Head of caudate nucleus (tissue), 42 donors: ENCODE measurements at regions of chr1 and their contacts with region 1.

Region 1: GRCh38 chr1:220089650-220090556 is at the start of gene BPNT1:
- DNase-seq: peak; percentile 65 to 98 (median 93)

Region 2: DNA sequence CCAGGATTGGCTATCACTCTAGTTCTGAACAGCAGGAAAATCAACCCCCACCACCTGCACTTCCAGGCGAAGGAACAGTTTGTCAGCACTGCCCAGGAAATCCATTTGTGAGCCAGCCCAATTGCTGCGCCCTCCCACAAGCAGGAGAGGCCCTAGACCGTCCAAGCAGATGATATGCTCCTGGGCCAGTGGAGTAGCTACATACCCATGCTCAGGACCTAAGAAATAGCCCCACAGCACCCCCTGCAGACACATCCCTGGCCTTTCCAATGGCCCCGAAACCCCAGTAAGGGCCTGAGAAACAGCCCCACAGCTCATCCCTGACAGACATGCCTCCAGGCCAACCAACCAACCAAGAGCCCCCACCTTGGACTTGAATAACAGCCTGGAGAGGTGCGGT is 365.5 kb before region 1 on chr1:
- intact Hi-C with region 1: no loop called
- DNase-seq: no peak

Region 3: GRCh38 chr1:220046052-220046930 is 43.6 kb before region 1 on chr1 and contains the start of gene EPRS1:
- intact Hi-C with region 1: loop called (anchors 10 kb)
- DNase-seq: peak; percentile 83 to 97 (median 94)